Aorta (tissue), 5 donors: ENCODE measurements at regions of chr7 and their contacts with region 1.

Region 1: GRCh38 chr7:33757562-33758165 is 147.7 kb upstream of the BMPER start:
- DNase-seq: no peak
- ATAC-seq: no peak
- H3K4me3 ChIP-seq: no peak overlapping the region
- H3K27ac ChIP-seq: no peak overlapping the region
- H3K4me1 ChIP-seq: no peaks in the 10 kb centered on the region
- H3K27me3 ChIP-seq: no peaks in the 10 kb centered on the region

Region 2: DNA sequence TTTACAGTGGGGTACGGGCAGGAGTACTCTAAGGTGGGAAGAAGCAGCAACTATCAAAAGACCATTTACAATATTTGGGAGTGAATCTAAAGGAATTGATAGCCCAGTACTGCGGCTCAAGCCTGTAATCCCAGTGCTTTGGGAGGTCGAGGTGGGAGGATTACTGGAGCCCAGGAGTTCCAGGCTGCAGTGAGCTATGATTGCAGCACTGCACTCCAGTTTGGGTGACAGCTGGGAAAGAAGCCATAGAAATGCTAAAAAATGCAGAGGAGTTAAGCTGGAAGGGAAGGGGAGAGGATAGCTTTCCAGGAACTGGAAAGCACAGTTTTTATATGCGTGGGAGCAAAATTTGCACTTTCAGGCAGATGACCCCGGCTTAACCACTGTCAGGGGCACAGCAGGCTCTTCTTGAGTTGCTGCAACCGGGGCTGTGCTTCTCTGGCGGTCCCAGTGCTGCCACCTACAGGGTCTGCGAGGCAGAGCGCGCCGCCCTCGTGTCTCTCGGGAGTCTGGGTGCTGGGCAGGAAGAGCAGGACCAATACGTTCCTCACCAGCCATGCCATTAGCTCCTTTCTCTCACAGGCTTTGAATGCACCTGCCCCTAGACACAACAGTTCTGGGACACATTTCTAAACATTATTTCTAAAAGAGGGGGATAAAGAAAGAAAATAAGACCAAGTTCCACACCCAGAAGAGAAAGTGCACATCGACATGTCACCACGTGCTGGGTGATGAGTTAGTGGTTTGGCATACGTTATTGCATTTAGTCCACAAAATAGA is 137.6 kb after region 1 on chr7:
- intact Hi-C with region 1: loop called (anchors 2 kb)
- DNase-seq: peak; percentile 87 to 94
- ATAC-seq: peak; percentile 89
- H3K4me3 ChIP-seq: no peak overlapping the region
- H3K27ac ChIP-seq: no peak overlapping the region
- H3K4me1 ChIP-seq: no peaks in the 10 kb centered on the region
- H3K27me3 ChIP-seq: no peaks in the 10 kb centered on the region

Region 3: DNA sequence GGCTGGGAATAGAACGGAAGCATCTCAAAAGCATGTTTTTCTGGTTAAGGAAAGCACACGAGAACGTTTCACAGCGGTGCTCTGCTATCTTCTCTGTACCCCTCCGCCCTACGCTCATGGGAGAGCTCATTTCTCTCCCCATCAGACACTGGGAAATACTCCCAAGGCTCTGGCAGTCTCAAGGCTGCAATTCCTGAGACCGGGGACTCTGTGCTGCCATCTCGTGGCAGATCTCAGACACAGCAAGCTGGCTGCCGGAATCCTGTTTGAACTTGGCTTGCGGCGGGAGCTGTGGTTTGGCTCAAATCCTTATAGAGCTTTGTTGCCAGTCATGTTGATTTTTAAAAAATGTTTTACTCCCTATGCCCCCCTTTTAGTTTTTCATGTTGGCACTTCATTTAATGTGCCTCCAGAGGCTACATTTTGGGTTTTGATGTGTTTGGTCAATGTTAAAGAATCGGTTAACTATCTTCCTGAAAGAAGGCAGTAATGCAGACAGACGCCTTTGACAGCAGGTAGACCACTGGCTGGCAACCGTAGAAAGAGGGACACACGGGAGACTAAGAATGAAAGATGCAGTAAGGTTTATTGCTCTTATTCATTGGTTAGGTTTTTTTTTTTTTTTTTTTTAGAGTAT is 175.3 kb after region 1 on chr7:
- intact Hi-C with region 1: loop called (anchors 2 to 10 kb)
- DNase-seq: peak; percentile 86 to 92
- ATAC-seq: peak; percentile 92
- H3K4me3 ChIP-seq: peak overlapping the region in 1 of 2 donors; percentile 41
- H3K27ac ChIP-seq: no peak overlapping the region
- H3K4me1 ChIP-seq: peaks cover 0 to 4% of the 10 kb centered on the region in 2 donors
- H3K27me3 ChIP-seq: no peaks in the 10 kb centered on the region